MCF 10A (cell line): ENCODE measurements at regions of chr3 and their contacts with region 1.

Region 1: GRCh38 chr3:852033-852432 is 240.8 kb upstream of the CNTN6 start:
- DNase-seq: peak; percentile 3
- H3K4me3 Mint-ChIP-seq: no peak overlapping the region
- H3K27ac Mint-ChIP-seq: no peak overlapping the region
- H3K4me1 Mint-ChIP-seq: no peaks in the 10 kb centered on the region
- H3K27me3 Mint-ChIP-seq: peaks cover 2% of the 10 kb centered on the region
- CTCF ChIP-seq: no peak

Region 2: DNA sequence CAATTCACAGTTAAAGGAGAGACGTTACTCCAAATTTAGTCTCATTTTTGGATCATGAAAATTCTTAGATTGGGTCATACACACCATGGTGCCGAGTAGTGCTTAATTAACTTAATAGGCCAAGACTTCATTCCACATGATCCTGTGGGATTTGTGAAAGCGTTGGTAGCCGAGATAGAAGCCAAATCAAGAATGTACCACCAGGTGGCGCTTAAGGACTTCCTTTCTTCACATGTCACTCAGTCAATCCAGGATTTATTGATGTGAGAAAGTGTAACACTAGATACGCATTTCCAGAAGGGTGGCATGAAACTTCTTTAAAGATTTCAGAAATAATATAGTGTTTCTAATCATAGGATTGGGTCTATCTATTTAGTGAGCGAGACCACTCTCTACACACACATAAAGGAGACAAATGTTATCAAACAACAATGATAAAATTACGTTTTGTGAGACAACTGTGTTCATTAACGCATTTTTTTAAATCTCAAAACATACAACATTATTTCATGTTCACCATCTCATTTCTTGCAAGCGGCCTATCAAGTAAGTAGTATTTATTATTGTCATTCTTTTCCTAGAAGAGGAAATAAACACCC is 219.4 kb before region 1 on chr3:
- CTCF ChIA-PET with region 1: interaction called, 4 read pairs
- POLR2A ChIA-PET with region 1: no interaction called
- intact Hi-C with region 1: loop called (anchors 1 kb)
- DNase-seq: peak; percentile 58
- H3K4me3 Mint-ChIP-seq: no peak overlapping the region
- H3K27ac Mint-ChIP-seq: no peak overlapping the region
- H3K4me1 Mint-ChIP-seq: no peaks in the 10 kb centered on the region
- H3K27me3 Mint-ChIP-seq: peaks cover 32% of the 10 kb centered on the region
- CTCF ChIP-seq: peak; percentile 29

Region 3: GRCh38 chr3:882533-882932 is 30.5 kb after region 1 on chr3:
- CTCF ChIA-PET with region 1: no interaction called
- POLR2A ChIA-PET with region 1: no interaction called
- intact Hi-C with region 1: no loop called
- DNase-seq: no peak
- H3K4me3 Mint-ChIP-seq: no peak overlapping the region
- H3K27ac Mint-ChIP-seq: no peak overlapping the region
- H3K4me1 Mint-ChIP-seq: no peaks in the 10 kb centered on the region
- H3K27me3 Mint-ChIP-seq: no peaks in the 10 kb centered on the region
- CTCF ChIP-seq: no peak